ENCODE measurements at regions of chr1 and their contacts with region 1.

Region 1: GRCh38 chr1:202968840-202969295 is 1.8 kb upstream of the CYB5R1 start:
- DNase-seq: peak; percentile 81
- H3K4me3 Mint-ChIP-seq: no peak overlapping the region
- H3K27ac Mint-ChIP-seq: no peak overlapping the region
- H3K4me1 Mint-ChIP-seq: peaks cover 24% of the 10 kb centered on the region
- H3K27me3 Mint-ChIP-seq: peaks cover 15% of the 10 kb centered on the region

Region 2: GRCh38 chr1:202888531-202889360 is 80.1 kb before region 1 on chr1 and contains the start of gene RABIF:
- intact Hi-C with region 1: loop called (anchors 2 kb)
- DNase-seq: peak; percentile 99
- H3K4me3 Mint-ChIP-seq: peak within 1 kb of the TSS; percentile 93
- H3K27ac Mint-ChIP-seq: peak within 1 kb of the TSS; percentile 98
- H3K4me1 Mint-ChIP-seq: peaks cover 20% of the 10 kb centered on the region
- H3K27me3 Mint-ChIP-seq: peaks cover 2% of the 10 kb centered on the region
- total RNA-seq, gene RABIF: 11.8 and 12.7 TPM in 2 replicates

Region 3: DNA sequence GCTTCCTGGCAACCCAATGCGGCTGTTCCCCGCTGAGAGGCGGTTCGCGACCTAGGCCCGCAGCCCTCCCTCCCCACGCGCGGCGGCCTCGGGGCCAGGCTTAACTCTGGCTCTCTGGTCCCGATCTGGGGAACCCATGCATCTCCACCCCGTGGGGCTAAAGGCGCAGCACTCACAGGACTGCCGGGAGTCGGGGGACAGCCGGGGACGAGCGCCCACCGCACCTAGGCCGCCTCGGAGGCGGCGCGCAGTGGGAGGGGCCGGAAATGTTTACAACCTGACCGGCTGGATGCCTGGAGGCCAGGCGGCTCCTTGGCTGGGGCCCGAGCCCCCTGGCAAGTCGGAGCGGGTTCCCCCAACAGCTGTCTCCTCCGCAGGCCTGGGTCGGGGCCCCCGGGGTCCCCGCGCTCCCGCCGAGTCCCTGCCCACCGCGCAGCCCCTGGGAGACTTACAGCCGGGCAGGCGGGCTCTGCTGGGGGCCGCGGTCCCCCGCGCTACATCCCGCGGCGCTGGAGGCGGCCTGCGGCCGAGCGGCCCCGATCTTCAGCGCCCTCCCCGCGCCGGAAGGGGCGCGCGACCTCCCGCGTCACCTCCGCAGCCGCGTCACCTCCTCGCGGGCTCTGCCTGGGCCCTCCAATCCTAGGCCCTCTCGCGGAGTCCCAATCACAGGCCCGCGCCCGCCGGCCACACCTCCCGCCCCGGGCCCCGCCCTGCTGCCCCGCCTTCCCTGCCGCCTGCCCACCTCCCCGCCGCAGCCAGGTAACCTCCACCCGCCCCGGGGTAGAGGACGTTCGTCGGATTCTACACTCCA is 10.9 kb before region 1 on chr1 and contains the start of gene ADIPOR1:
- intact Hi-C with region 1: loop called (anchors 1 kb)
- DNase-seq: peak; percentile 98
- H3K4me3 Mint-ChIP-seq: peak within 1 kb of the TSS; percentile 89
- H3K27ac Mint-ChIP-seq: peak within 1 kb of the TSS; percentile 82
- H3K4me1 Mint-ChIP-seq: peaks cover 31% of the 10 kb centered on the region
- H3K27me3 Mint-ChIP-seq: no peaks in the 10 kb centered on the region
- total RNA-seq, gene ADIPOR1: 86.7 and 92.1 TPM in 2 replicates

Region 4: DNA sequence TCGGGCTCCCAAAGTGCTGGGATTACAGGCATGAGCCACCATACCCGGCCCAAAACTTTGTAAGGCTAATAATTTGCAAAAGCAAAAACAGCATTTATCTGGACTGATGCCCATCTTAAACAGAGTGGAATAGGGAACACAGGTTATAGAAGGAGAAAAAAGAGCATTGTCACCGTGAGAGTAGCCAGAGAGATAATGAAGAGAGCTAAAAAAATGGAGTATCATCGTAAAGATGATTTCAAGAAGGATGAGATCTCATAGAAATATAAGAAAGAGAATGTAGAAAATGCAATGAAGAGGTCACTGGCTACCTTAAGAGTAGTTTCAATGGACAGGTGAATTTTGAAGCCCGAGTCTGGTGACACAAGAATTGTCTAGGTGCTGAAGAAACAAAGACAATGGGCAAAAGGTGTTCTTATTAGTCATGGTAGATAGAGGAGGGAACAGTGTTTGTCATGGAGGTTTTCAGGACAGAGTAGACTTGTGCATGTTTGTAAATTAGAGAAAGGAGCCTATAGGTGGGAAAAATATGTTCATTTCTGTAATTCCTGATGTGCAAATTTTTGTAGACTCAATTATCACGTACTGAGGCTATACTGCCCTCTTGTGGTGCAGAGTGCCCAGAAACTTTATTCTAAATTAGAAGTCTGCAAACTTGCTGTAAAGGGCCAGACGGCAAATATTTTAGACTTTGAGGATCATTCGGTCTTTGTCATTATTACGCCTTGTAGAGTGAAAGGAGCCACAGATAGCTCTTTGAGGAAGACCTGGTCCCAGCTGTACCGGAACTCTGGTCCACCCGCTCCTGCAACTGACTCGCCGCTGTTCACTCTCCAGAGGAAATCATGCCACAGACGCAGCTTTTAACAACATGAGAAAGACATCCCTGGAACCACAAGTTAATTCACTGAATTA is 30.2 kb after region 1 on chr1:
- intact Hi-C with region 1: loop called (anchors 1 kb)
- DNase-seq: peak; percentile 90
- H3K4me3 Mint-ChIP-seq: peak overlapping the region; percentile 62
- H3K27ac Mint-ChIP-seq: no peak overlapping the region
- H3K4me1 Mint-ChIP-seq: peaks cover 17% of the 10 kb centered on the region
- H3K27me3 Mint-ChIP-seq: peaks cover 30% of the 10 kb centered on the region

Region 5: DNA sequence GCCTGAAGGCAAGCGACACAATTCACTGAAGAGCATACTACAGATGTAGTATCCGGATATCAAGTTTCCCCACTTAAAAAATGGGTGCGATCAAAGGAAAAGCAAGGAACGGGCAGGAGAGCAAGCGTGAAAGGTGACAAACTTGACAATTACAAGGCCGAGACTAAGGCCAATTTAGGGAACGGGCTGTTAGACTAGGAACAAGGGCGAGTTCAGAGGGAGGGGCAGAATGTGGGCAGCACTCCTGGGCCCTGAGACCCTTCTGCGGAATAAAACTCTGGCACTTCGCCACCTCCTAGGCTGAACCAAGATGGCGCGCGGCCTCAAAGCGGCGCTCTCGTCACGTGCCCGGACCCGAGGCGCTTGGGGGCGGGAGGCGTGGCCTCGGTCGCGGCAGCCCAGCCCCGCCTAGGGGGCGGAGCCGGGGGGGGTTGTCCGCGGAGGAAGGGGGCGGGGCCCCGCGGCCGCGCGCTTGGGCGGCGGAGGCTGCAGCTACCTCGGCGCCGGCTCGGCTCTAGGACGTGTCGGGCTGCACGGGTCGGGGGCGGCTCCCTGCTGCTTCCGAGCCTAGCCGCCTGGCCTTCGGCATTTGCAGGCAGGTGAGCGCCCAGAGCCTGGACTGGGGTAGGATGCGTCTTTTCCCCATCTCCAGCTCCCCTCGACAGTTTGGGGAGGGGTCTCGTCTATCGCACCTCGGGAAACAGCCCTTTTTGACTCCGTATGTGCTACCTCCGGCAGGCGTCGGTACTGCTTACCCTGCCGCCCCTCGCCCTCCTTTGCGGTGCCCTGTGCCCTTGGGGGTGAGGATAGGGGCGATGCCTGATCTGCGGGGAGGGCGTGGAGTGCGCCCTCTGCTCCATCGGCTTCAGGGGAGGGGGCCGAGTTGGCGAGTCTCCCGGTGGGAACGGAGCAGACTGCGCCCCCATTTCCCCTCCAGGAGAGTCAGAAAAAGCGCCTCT is 57.4 kb after region 1 on chr1 and contains the start of gene PPFIA4:
- intact Hi-C with region 1: loop called (anchors 1 kb)
- DNase-seq: peak; percentile 97
- H3K4me3 Mint-ChIP-seq: peak within 1 kb of the TSS; percentile 92
- H3K27ac Mint-ChIP-seq: peak within 1 kb of the TSS; percentile 80
- H3K4me1 Mint-ChIP-seq: peaks cover 26% of the 10 kb centered on the region
- H3K27me3 Mint-ChIP-seq: peaks cover 2% of the 10 kb centered on the region
- total RNA-seq, gene PPFIA4: 34.2 and 35.1 TPM in 2 replicates